ENCODE measurements at regions of chr2 and their contacts with region 1.

Region 1: DNA sequence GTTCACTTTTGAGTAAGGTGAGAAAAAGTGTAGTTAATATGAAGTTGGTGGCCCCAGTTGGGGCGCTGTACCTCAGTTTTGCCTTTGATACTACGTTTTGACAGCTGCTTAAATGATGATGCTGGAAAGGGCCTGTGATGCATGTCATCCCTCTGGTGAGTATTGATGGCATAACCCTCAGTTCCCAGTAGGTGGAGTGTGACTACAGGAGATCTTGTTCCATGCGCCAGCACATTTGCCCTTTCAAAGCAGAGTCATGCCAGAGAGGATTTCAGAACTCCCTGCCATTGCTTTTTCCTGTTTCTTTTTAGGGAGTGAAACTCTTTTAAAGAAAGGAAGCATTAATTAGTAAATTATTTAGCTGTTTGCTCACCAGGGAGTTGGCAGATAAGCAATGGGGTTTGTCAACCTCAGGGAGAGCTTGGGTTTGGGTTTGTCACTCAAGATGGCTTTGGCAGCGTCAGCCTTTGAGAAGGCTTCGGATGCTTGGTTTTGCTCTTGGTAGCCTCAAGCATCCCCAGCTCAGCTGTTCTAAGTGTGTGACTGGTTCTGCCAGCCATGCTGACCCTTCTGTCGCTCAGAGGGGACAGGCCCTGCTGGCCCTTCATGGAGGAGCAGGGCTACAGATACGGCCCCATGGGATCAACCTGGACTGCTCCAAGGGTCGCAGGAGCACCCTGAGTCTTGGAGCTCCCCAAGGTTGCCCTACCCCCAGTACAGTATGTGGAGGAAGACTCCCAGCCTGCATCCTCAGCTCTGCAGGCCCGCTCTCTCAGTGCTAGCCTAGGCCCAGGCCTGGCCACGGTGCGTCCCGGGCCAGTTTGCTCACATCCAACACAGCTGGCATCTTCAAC is 29.1 kb downstream of the ARMC9 start:
- DNase-seq: peak; percentile 54
- ATAC-seq: peak; percentile 96 to 97

Region 2: GRCh38 chr2:231297108-231297908 is 69.8 kb after region 1 on chr2:
- intact Hi-C with region 1: loop called in 1 of 2 experiments (anchors 5 kb)
- DNase-seq: peak; percentile 67
- ATAC-seq: peak; percentile 83 to 84

Region 3: DNA sequence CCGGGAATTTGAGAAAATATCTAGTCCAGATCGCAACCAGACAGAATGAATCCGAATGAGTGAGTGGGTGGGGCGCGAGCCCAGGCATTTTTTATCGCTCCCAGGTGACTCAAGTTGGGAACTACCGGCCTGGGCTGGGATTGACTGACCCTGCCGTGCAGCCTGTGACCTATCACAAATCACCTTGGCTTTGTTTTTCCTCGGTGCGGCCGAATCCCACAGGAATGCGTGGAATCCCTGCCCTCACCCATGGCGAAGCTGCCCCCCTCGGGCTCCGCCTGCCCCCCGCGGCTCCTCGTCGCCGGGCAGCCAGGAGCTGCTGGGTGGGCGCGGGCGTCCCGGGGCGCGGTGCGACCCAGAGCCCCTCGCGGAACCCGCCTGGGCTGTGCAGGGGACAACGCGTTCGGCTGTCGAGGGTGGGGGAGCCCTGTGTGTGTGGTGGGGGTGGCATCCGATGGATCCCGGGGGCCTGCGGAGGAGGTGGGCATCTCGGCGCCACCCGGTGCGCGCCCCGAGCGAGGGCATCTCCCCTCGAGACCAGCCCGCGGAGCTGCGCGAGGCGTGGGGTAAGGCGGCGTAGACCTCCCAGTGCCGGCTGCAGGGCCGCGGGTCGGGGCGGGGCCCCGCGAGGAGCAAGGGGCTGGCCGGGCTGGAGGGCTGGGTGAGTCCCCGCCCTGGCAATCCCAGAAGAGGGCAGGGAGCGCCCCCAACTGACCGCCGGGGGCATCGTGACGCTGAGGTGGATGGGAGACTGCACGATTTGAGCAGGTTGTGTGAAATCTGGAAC is 184.5 kb after region 1 on chr2:
- intact Hi-C with region 1: loop called (anchors 2 to 5 kb)
- DNase-seq: peak; percentile 89
- ATAC-seq: peak; percentile 99 to 100

Region 4: GRCh38 chr2:231452799-231453508 is 225.4 kb after region 1 on chr2:
- intact Hi-C with region 1: loop called in 1 of 2 experiments (anchors 5 kb)
- DNase-seq: no peak
- ATAC-seq: peak; percentile 9 to 13

Measured in left cardiac atrium (tissue), 4 donors.